Activated CD8-positive, alpha-beta memory T cell treated with anti-CD3 and anti-CD28 coated beads, Interleukin-2, amount 10 ng/mL, durations not matched to agents 7 days and 5 days (primary cell): ENCODE measurements at regions of chr2 and their contacts with region 1.

Region 1: GRCh38 chr2:170928824-170929685 is at the start of gene GORASP2:
- DNase-seq: peak; percentile 99
- ATAC-seq: peak; percentile 93
- H3K4me3 Mint-ChIP-seq: peak within 1 kb of the TSS; percentile 95
- H3K27ac Mint-ChIP-seq: peak within 1 kb of the TSS; percentile 97
- H3K4me1 Mint-ChIP-seq: peaks cover 40% of the 10 kb centered on the region
- H3K27me3 Mint-ChIP-seq: no peaks in the 10 kb centered on the region
- total RNA-seq, gene GORASP2: 45.3 to 64.4 TPM

Region 2: DNA sequence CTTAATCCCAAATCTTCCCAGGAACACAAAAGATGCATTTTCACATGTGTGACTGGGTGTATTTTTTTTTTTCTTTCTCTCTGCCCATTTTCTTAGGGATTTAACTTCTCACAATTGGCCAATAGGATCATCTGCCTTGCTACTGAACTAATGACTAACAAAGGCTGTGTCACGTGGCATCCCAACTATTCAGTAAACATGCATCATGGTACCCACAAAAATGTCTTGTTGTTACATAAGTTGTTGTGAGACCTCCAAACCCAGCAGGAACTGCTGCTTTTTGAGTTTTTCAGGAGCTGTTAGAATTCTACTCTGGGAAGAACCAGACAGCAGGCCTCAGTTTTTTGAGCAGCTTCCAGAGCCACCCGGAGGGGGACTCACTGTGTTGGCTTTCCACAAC is 80.5 kb before region 1 on chr2:
- CTCF ChIA-PET with region 1: interaction called, 10 read pairs
- DNase-seq: no peak
- ATAC-seq: no peak
- H3K4me3 Mint-ChIP-seq: no peak overlapping the region
- H3K27ac Mint-ChIP-seq: no peak overlapping the region
- H3K4me1 Mint-ChIP-seq: peaks cover 8% of the 10 kb centered on the region
- H3K27me3 Mint-ChIP-seq: no peaks in the 10 kb centered on the region

Region 3: DNA sequence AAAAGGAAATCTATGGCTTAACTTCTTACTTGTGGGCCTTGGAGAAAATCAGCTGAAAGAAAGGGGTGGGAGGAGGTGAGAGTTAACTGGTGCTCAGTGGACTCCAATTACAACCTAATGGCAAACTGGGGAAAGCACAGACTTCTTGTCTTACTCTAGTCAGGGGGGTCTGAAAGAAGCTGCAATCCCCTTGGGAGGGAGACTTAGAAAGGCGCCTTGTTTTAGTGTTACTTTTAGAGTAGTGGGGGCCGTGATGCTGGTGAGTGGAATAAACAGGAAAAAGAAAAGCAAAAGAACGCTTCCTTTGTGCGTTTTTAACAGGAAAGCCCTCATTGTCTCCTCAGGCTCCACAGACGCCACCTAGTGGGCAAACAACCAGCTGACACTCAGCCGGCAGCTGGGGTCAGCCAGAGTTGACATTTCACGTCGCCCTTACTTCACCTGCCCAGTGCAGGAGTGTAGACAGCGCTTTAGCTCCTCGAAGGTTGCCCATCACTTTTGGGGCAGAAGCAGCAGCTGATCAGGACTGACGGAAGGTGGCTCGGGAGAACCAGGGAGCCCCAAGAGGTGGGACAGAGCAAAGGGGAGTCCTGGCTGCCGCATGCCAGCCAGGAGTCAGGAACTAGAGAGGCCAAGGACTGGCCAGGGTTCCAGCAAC is 55.9 kb before region 1 on chr2:
- CTCF ChIA-PET with region 1: interaction called, 18 read pairs
- DNase-seq: peak; percentile 87
- ATAC-seq: peak; percentile 98
- H3K4me3 Mint-ChIP-seq: peak overlapping the region; percentile 69
- H3K27ac Mint-ChIP-seq: peak overlapping the region; percentile 76
- H3K4me1 Mint-ChIP-seq: peaks cover 13% of the 10 kb centered on the region
- H3K27me3 Mint-ChIP-seq: peaks cover 10% of the 10 kb centered on the region

Region 4: GRCh38 chr2:170940066-170940465 is 11.0 kb after region 1 on chr2:
- CTCF ChIA-PET with region 1: interaction called, 21 read pairs
- DNase-seq: no peak
- ATAC-seq: no peak
- H3K4me3 Mint-ChIP-seq: no peak overlapping the region
- H3K27ac Mint-ChIP-seq: no peak overlapping the region
- H3K4me1 Mint-ChIP-seq: peaks cover 18% of the 10 kb centered on the region
- H3K27me3 Mint-ChIP-seq: no peaks in the 10 kb centered on the region

Region 5: GRCh38 chr2:171160119-171160955 is 231.3 kb after region 1 on chr2 and contains the start of gene TLK1:
- CTCF ChIA-PET with region 1: interaction called, 11 read pairs
- DNase-seq: peak; percentile 76
- ATAC-seq: peak; percentile 64
- H3K4me3 Mint-ChIP-seq: peak within 1 kb of the TSS; percentile 91
- H3K27ac Mint-ChIP-seq: peak within 1 kb of the TSS; percentile 95
- H3K4me1 Mint-ChIP-seq: peaks cover 57% of the 10 kb centered on the region
- H3K27me3 Mint-ChIP-seq: no peaks in the 10 kb centered on the region
- total RNA-seq, gene TLK1: 81.3 to 83.2 TPM

Region 6: DNA sequence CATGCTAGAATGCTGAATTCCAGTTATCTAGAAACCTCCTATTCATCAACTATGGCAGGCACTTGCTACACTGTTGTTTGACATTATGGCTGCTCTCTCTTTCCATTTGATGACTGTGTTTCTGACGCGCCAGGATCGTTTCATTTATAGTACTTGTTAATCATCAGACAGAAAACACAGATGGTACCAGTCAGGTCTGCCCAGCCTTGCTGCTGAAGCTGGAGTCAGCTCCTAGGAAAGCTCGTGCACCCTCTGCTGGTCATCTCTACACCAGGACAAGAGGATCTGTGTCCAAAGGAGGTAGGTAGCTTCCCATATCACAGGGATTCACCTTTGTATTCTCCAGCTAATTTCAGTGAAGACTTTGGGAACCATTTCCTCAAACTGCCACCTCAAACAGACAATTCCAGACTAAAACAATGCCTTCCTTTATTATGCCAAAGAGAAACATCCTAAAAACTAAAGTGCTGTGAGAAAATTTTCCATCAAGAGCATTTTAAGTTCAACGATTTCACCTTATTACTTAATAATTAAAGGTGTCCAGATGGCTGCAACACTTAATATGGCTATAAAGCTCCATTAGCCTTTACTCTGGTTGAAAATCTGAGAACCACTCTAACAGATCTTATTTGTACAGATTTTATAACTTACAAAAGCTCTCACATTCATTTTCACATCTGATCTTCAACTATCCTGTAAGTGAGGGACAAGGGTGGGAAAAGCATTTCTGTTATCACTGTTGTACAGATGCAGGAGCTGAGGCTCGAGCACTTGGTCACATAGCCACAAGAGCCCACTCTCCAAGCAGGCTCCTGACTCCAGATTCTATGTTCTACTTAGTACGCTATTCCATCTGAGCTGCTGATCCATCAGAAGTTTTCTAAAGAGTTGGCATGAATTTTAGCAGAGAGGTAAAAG is 487.2 kb after region 1 on chr2:
- CTCF ChIA-PET with region 1: interaction called, 11 read pairs
- DNase-seq: peak; percentile 89
- ATAC-seq: peak; percentile 95
- H3K4me3 Mint-ChIP-seq: no peak overlapping the region
- H3K27ac Mint-ChIP-seq: peak overlapping the region; percentile 61
- H3K4me1 Mint-ChIP-seq: peaks cover 27% of the 10 kb centered on the region
- H3K27me3 Mint-ChIP-seq: no peaks in the 10 kb centered on the region

Region 7: DNA sequence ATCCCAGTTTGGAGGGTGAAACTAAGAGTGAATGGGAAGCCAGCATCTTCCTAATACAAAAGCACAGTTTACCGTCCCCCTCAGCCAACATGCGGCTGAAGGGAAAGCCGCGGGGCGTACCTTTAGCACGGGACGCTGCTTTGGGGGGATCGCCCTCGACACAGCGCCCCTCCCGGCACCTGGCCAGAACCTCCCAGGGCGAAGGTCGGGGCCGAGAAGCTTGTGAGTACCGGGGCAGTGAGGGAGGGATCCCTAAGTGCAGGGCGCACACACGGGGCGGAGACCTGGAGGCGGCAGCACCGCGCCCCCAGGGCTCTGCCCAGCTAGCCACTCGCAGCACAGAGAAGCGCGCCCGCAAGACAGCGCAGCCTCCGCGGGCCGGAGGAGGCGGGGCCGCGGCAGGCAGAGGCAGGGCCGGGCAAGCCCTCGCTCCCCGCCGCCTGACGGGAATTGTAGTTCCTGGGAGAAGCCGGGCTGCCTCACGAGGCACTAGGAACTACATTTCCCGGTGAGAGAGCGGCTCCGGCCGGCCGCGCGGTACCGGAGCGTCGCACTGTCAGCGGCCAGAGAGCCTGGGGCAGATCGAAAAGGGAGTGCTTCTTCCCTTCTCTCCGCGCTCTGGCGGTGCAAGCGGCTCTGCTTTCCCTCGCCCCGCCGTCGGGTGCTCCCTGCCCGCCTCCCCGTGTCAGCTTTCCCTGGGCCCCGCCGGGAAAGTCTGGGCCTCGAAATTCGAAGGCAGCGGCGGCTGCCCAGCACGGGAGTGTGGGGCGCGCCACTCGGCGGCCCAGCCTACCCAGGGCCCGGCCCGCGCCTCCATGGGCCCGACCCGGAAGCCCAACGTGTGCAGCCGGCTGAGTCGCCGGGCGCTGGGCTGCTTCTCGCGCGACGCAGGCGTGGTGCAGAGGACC is 505.0 kb after region 1 on chr2 and contains the starts of genes DCAF17 and METTL8:
- CTCF ChIA-PET with region 1: interaction called, 23 read pairs
- DNase-seq: peak; percentile 97
- ATAC-seq: peak; percentile 92
- H3K4me3 Mint-ChIP-seq: peak within 1 kb of the TSS; percentile 85
- H3K27ac Mint-ChIP-seq: peak within 1 kb of the TSS; percentile 90
- H3K4me1 Mint-ChIP-seq: peaks cover 38% of the 10 kb centered on the region
- H3K27me3 Mint-ChIP-seq: no peaks in the 10 kb centered on the region
- total RNA-seq, gene DCAF17: 18.7 to 19.7 TPM
- total RNA-seq, gene METTL8: 20.4 to 33.7 TPM